Posterior cingulate gyrus (tissue), 11 donors: ENCODE measurements at regions of chr12 and their contacts with region 1.

Region 1: DNA sequence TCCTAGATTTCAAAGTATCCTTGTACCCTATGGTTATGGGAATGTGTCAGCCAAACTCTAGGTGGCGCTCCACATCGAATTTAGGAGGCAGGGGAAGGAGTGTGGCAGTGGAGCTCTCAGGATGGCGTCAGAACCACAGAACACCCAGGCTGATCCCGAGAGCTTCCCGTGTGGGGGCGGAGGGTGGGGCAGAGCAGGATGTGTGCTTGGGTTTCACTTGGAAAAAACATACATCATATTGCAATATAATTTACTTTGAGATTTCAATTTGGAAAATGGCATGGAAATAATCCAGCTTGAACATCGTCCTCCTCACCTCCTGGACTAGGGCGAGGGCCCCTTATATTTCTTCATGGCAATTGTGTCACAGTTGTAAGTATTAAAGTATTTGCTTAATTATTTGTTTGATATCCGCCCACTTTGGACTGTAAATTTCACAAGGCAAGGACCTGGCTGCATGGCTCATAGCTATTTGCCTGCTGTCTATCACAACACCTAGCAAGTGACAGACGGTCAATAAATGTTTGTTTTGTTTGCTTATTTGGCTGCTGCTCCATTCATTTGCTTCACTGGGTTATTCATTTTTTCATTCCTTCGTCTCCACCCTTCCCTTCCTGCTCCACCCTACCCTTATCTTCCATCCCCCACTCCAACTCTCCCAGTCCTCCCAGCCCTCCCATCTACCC is 221.5 kb upstream of the HMGA2 start:
- DNase-seq: peak; percentile 22 to 92 (median 66)

Region 2: GRCh38 chr12:65430571-65431306 is 172.0 kb before region 1 on chr12:
- intact Hi-C with region 1: no loop called
- DNase-seq: no peak

Region 3: GRCh38 chr12:65685514-65685913 is 82.8 kb after region 1 on chr12:
- intact Hi-C with region 1: loop called (anchors 10 kb)
- DNase-seq: no peak